ENCODE measurements at regions of chr1 and their contacts with region 1.

Region 1: DNA sequence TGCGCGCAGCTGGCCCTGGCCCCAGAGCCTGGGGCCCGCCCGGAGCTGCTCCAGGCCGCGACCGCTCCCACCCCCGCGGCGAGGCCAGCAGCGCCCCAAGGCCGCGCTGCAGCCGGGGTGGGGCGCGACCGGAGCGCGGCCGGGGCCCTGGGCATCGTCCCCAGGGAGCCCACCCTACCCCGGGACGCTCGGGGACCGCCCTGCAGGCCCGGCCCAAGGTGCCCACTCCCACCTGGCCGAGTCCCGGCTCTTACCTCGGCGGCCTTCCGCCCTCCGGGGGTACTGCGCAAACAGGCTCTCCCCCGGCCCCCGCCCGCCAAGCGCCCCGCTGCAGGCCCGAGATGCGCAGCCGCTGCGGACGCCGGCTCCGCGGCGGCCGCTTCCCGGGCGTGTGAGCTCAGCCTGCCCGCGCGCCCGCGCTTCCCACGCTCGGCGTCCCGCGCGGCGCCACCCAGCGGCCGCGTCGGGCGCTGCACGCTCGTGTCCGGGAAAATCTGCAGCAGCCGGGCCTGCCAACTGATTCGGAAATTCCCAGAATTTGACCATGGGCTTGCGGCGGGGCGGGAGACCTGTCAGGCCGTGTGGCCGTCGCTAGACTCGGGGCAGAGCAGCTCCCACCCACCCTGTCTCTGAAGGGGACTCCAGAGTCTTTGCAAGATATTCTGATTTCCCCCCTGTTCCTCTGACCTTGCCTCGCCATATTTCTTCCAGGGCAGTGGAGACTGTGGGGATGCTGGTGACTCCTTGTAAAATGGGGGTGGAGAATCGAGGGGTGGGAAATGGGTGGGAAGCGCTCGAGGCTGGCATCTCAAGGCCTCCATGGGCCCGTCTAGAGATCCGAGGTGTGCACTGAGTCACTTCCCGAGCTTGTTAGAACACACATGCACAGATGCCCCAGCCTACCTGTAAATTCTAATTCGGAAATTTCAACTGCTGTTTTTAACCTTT is 41.9 kb downstream of the CD34 start:
- DNase-seq: peak; percentile 83
- ATAC-seq: peak; percentile 66 to 84

Region 2: GRCh38 chr1:207828485-207829158 is 40.4 kb before region 1 on chr1:
- intact Hi-C with region 1: loop called (anchors 1 to 5 kb)
- DNase-seq: peak; percentile 78
- ATAC-seq: peak; percentile 35 to 50

Region 3: DNA sequence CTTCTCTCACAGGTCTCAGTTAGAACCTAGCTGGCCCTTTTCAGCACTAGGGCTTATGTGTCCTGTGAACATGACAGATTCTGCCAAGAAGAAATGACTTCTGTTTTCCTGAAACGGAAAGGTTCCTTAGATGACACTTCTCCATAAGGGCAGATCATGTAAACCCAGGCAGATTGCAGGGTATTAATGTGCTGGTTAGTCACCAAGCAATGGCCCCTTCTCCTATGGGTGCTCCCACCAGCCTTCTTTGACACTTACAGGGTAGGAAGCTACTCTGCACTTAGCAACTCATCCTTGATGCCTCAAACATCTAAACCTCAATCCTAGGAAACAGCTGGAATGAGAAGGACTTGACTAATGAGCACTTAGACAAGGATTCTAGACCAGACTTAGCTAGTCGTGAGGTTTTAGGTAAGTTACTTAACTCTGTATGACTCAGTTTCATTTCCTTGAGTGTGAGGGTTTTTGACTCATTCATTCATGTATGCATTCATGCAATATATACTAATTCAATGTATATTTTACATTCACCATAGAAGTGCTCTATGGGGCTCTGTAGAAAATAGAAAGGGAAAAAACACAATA is 449.2 kb after region 1 on chr1:
- intact Hi-C with region 1: no loop called
- DNase-seq: no peak
- ATAC-seq: no peak

Measured in left cardiac atrium (tissue), 4 donors.